Cardiac septum (tissue), 1 donor: ENCODE measurements at regions of chr3 and their contacts with region 1.

Region 1: GRCh38 chr3:127697551-127698240 is 24.9 kb downstream of the ABTB1 start:
- DNase-seq: peak; percentile 87

Region 2: GRCh38 chr3:127288921-127289705 is 408.6 kb before region 1 on chr3:
- intact Hi-C with region 1: no loop called
- DNase-seq: no peak

Region 3: DNA sequence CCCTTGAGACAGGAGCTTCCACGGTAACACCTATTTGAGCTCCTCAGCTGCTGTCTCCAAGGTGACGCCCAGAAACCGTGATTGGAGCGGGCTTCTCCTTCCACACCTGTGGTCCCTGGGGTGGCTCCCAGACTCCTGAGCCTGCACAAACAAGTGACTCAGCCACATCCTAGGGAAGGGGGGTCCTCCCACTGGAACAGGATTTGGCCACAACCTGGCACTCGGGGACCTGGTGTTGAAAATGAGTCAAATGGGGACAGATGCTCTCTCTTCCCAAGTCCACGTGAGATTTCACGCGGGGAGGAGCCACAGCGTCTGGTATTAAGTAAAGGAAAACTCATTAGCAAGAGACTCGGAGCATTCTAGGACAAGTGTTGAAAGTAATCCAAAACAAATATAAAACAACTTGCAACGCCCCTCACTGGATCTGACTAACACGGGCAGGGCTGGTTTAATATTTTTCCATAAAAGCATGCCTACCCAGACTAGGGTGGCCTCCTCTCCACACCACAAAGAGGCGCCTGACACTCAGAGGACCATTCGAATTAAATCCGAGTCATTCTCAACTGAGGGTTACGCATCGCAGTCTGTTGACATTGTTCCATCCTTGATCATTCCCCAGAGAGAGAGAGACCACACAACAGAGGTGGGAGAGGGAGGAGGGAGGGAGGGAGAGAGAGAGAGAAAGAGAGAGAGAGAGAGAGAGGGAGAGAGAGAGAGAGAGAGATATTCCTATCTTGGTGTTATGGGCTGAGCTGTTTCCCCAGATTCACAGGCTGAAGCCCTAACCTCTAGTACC is 50.2 kb after region 1 on chr3:
- intact Hi-C with region 1: loop called (anchors 1 kb)
- DNase-seq: peak; percentile 82

Region 4: GRCh38 chr3:127822698-127823425 is 125.2 kb after region 1 on chr3:
- intact Hi-C with region 1: loop called (anchors 2 kb)
- DNase-seq: peak; percentile 81

Region 5: GRCh38 chr3:127835993-127836882 is 138.5 kb after region 1 on chr3:
- intact Hi-C with region 1: no loop called
- DNase-seq: no peak

Region 6: DNA sequence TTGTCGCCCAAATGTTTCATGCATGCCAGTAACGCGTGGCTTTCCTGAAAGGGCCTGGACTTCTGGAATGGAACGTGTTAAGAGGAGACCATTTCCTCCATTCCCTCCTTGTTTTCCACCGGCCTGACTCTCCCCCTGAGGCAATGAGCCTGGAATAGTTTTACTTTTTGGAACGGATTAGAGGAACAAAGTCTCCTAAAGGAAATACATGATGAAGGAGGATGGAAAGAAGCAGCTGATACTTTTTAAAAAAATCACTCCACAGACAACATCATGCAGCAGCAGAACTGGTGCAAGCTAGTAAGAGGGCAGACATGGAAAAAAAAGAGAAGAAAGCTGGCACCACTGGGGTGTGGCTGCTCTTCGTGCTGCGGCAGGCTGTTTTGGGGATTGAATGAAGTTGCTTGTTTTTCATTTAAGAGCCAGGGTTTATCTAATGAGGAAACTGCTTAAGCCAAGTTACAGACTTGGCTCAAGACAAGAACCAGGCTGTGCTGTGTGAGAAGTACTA is 213.8 kb after region 1 on chr3:
- intact Hi-C with region 1: loop called (anchors 5 kb)
- DNase-seq: no peak

Region 7: DNA sequence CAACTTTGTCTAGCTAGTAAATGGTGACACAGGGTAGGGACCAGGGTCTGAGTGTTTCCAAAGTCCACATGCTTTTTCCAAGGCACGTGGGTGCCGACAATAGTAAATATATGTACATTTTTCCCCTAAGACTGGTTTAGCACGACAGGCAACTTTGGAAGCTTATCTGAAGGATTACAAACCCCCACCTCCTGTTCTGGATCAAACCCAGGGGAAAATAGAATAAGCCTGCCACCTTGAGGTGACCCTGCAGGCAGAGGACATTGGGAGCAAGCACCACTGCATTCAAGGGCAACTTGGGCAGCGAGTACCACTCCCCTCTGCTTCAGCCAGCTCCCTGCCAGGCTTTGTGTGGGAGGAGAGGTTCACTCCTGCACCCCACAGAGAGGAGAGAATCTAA is 262.1 kb after region 1 on chr3:
- intact Hi-C with region 1: loop called (anchors 5 kb)
- DNase-seq: no peak